A549 (cell line): ENCODE measurements at regions of chr3 and their contacts with region 1.

Region 1: GRCh38 chr3:170908235-170909116 is at the start of gene EIF5A2:
- DNase-seq: peak; percentile 93
- ATAC-seq: peak; percentile 96 to 97
- H3K4me3 ChIP-seq: peak within 1 kb of the TSS; percentile 70
- H3K27ac ChIP-seq: peak within 1 kb of the TSS; percentile 73 to 92
- H3K4me1 ChIP-seq: peaks cover 14% of the 10 kb centered on the region
- CTCF ChIP-seq: no peak
- EP300 ChIP-seq: no peak
- POLR2A ChIP-seq: peak; percentile 51
- RAD21 ChIP-seq: no peak
- polyA plus RNA-seq, gene EIF5A2: 11.7 and 15.2 TPM in 2 replicates

Region 2: GRCh38 chr3:170869645-170870593 is 38.6 kb before region 1 on chr3 and contains the start of gene RPL22L1:
- CTCF ChIA-PET with region 1: no interaction called
- POLR2A ChIA-PET with region 1: interaction called, 24 read pairs
- DNase-seq: peak; percentile 72 to 94
- ATAC-seq: peak; percentile 96
- H3K4me3 ChIP-seq: peak within 1 kb of the TSS; percentile 68
- H3K27ac ChIP-seq: peak within 1 kb of the TSS; percentile 90 to 97
- H3K4me1 ChIP-seq: peaks cover 19% of the 10 kb centered on the region; the same call in 2 of the 3 replicates
- CTCF ChIP-seq: no peak
- EP300 ChIP-seq: no peak
- POLR2A ChIP-seq: peak; percentile 97
- RAD21 ChIP-seq: no peak
- polyA plus RNA-seq, gene RPL22L1: 191 and 258 TPM in 2 replicates